ENCODE measurements at regions of chr1 and their contacts with region 1.

Region 1: DNA sequence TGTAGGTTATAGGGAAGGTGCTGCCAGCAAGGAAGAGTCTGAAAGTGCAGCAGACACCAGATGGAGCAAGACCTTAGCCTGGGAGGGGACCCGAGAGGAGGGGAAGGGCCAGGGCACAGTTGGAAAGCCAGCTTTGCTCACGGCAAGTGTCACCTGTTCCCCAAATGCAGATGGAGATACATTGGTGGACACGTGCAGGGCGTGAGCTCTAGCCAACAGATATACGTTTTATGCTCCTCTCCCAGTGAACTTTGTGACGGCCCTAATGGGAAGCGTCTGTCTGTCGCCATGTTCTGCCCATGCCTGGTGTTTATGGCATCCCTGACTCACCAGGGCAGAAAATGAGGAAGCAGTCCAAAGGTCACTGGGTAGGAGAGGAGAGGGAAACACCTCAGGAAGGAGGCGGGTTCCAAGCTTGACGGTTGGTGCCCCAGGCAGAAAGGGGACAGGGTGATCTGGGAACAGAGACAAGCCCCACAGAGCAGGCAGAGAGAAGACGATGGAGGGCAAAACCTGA is 7.6 kb downstream of the GPA33 start:
- DNase-seq: no peak
- ATAC-seq: peak in 7 of 8 donors; percentile 15 to 62 (median 46)
- H3K4me3 ChIP-seq: no peak overlapping the region
- H3K27ac ChIP-seq: peak overlapping the region in 5 of 10 donors; percentile 22 to 70 (median 64)
- H3K4me1 ChIP-seq: peaks cover 0 to 58% (median 14%) of the 10 kb centered on the region in 9 donors
- H3K27me3 ChIP-seq: peaks cover 0 to 4% (median 0%) of the 10 kb centered on the region in 7 donors
- CTCF ChIP-seq: no peak

Region 2: GRCh38 chr1:167114725-167115124 is 32.2 kb after region 1 on chr1:
- intact Hi-C with region 1: loop called in 1 of 10 experiments (anchors 5 kb)
- DNase-seq: no peak
- ATAC-seq: no peak
- H3K4me3 ChIP-seq: no peak overlapping the region
- H3K27ac ChIP-seq: no peak overlapping the region
- H3K4me1 ChIP-seq: peaks cover 0 to 39% (median 0%) of the 10 kb centered on the region in 9 donors
- H3K27me3 ChIP-seq: peaks cover 0 to 14% (median 0%) of the 10 kb centered on the region in 7 donors
- CTCF ChIP-seq: no peak

Region 3: DNA sequence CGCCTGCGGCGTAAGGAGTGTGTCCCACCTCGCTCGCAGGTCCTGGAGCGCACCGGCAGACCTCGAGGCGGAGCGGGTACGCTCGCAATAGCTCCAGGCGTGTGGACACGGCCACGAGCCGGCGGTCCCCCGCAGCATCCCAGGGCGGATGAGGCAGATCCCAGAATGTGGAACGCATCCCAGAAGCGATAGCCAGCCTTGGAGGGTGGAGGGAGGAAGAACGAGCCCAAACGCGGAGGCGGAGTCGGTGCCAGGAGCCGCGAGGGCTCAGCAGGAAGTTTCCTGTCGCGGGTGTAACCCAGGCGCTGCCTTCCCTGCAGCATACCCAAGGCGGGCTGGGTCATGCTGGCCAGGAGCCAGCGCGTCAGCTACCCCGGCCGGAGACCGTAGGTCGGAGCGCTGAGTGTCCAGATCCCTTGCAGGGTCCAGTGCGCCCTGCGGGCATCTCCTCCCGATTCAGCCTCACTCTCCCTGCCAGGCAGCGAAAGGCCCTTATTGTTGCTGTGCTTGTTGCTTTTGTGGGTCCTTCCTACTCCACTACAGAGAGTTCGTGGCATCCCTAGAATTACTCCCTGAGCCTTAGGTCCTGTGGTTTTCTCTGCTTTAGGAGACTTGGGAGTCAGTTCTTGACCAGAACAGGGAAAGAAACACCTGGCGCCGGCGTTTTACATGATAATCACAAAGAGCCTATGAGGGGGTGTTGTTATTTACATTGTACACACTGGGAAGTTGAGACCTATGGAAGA is 39.0 kb after region 1 on chr1:
- intact Hi-C with region 1: loop called in 2 of 10 experiments (anchors 5 kb)
- DNase-seq: no peak
- ATAC-seq: peak; percentile 25 to 61 (median 36)
- H3K4me3 ChIP-seq: peak overlapping the region in 8 of 10 donors; percentile 16 to 51 (median 24)
- H3K27ac ChIP-seq: no peak overlapping the region
- H3K4me1 ChIP-seq: peaks cover 0 to 42% (median 5%) of the 10 kb centered on the region in 9 donors
- H3K27me3 ChIP-seq: peaks cover 0 to 23% (median 0%) of the 10 kb centered on the region in 7 donors
- CTCF ChIP-seq: no peak

Measured in heart right ventricle (tissue), 16 donors.